MCF 10A (cell line): ENCODE measurements at regions of chr9 and their contacts with region 1.

Region 1: DNA sequence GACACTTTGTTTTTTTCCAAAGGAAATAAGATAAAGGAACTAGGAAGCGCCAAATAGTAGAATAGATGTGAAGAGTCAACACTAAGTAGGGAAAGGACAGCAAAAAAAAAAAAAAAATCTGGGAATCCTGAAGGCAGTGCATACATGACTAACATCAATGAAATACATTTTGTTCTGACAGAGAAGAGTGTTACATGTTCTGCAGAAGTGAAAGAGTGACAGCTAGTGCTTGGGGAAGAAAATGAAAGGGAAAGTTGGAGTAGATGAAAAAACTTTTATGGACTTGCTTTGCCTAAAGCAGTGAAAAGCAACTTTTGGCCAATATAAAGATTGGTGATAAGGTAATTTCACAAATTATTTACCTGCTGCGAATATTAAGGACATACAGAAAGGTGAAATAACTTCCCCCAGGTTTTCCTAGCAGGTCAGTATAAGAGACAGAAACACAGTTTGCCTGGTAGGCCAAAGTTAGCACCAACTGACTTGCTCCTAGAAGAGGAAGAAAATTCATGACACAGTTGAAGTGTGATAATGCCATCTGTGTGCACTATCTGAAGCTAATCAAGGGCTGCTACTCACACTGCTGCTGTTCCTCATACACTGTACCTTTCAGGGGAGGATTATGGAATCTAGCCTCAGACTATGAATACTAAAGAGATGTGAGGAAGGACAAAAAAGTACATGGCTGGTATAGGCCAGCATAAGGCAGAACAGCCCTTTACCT is 38.6 kb downstream of the RANBP6 start:
- DNase-seq: peak; percentile 20
- H3K4me3 Mint-ChIP-seq: peak overlapping the region; percentile 18
- H3K27ac Mint-ChIP-seq: peak overlapping the region; percentile 74
- H3K4me1 Mint-ChIP-seq: peaks cover 24% of the 10 kb centered on the region
- H3K27me3 Mint-ChIP-seq: no peaks in the 10 kb centered on the region
- CTCF ChIP-seq: no peak

Region 2: DNA sequence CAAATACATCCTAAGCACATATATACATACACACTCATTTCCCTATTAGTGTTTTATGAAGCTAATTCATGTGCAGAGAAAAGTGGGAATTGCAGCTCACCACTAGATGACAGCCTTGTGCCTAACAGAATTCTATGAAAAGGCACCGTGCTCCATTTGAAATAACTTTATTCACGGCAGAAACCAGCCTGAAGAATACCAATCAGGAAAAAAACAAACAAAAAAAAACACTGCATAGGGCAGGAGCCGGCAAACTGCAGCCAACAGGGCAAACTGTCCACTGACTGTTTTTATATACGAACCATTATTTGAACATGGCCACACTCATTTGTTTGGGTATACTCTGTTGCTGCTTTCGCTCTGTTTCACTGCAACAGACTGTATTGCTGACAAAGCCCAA is 177.5 kb before region 1 on chr9:
- CTCF ChIA-PET with region 1: interaction called, 3 read pairs
- POLR2A ChIA-PET with region 1: no interaction called
- intact Hi-C with region 1: loop called (anchors 1 kb)
- DNase-seq: peak; percentile 55
- H3K4me3 Mint-ChIP-seq: no peak overlapping the region
- H3K27ac Mint-ChIP-seq: no peak overlapping the region
- H3K4me1 Mint-ChIP-seq: peaks cover 6% of the 10 kb centered on the region
- H3K27me3 Mint-ChIP-seq: no peaks in the 10 kb centered on the region
- CTCF ChIP-seq: peak; percentile 70

Region 3: DNA sequence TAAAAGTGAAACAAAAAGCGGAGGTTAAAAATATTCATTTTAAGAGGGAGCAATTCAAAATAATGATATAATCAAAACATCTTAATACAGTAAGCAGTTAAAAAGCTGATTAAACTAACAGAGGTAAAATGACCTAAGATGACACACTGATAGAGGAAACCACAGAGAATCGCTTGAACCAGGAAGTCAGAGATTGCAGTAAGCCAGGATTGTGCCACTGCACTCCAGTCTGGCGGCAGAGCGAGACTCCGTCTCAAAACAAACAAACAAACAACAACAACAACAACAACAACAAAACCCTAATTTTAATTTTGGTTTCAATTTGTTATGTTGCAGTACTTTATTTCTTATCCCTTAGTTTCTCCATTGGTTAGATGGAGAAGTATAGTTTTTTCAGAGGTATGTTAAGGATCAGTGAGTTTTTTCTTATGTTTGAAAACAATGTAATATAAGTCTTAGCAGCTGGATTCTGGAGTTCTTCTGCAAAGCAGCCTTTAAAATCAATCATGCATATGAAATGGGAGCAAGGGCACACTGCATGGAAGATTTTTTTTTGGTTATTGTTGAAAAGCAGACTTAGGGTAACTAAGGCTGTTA is 27.6 kb before region 1 on chr9:
- CTCF ChIA-PET with region 1: no interaction called
- POLR2A ChIA-PET with region 1: no interaction called
- intact Hi-C with region 1: no loop called
- DNase-seq: peak; percentile 23
- H3K4me3 Mint-ChIP-seq: no peak overlapping the region
- H3K27ac Mint-ChIP-seq: no peak overlapping the region
- H3K4me1 Mint-ChIP-seq: no peaks in the 10 kb centered on the region
- H3K27me3 Mint-ChIP-seq: no peaks in the 10 kb centered on the region
- CTCF ChIP-seq: no peak